ENCODE measurements at regions of chr16 and their contacts with region 1.

Region 1: GRCh38 chr16:89489040-89489721 is 1.2 kb downstream of the ANKRD11 start:
- DNase-seq: peak; percentile 79
- CTCF ChIP-seq: peak; percentile 3

Region 2: GRCh38 chr16:89330177-89330856 is 158.9 kb before region 1 on chr16:
- in situ Hi-C with region 1: loop called (anchors 10 kb)
- DNase-seq: no peak
- CTCF ChIP-seq: no peak

Region 3: GRCh38 chr16:89422905-89423630 is 66.1 kb before region 1 on chr16:
- in situ Hi-C with region 1: loop called (anchors 10 kb)
- DNase-seq: peak; percentile 76
- CTCF ChIP-seq: no peak

Region 4: DNA sequence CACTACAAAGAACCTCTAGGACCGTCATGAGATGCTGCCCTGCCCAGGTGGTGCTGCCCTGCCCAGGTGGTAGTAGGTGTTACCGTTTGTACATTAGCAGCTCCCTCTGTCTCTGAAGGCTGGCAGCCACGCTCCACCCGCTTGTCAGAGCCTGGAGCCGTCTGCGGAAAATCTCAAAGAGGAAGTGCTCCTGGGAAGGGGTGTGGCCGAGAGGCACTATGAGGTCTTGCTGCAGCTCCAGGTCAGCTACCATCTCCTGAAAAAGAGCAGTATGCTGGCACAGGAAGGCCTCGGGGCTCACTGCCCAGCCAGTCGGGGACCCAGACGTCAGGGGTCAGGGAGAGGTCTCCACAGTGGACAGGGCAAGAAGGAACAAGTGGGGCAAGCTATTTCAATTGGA is 260.5 kb after region 1 on chr16:
- in situ Hi-C with region 1: no loop called
- DNase-seq: no peak
- CTCF ChIP-seq: no peak

Measured in GM13976 (cell line).